A549 (cell line): ENCODE measurements at regions of chr19 and their contacts with region 1.

Region 1: DNA sequence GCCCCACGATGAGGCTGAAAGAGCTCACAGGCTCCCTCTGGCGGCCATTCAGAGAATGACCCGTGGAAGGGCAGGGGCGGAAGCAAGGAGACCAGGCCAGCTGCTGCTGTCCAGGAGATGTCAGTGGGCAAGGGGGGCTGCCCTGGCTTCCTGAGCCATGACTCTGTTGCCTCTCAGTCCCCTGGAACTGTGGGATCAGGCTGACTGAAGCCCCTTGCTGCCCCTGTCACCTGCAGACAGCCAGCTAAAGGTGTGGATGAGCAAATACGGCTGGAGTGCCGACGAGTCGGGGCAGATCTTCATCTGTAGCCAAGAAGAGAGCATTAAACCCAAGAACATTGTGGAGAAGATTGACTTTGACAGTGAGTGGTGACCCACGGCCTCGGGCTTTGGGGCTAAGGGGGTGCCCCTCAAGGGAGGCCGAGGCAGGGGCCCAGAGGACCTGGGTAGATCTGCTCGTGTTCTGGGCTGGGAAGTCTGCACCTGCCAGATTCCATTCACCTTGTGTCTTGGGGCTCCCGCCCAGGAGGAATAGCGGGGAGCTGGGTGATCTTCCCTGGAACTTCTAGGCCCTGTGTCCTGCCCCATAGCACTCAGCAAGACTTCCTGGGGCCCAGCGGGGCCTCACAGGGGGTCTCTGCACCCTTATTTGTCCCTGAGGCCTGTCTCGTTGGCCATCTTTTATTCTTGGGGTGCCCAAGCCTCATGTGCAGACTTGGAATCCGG is 12.5 kb upstream of the ACTN4 start:
- DNase-seq: peak; percentile 80 to 93
- ATAC-seq: peak; percentile 58 to 64; a peak in 5 of 6 replicates
- H3K4me3 ChIP-seq: no peak overlapping the region
- H3K27ac ChIP-seq: peak overlapping the region; percentile 9 to 77; a peak in 3 of 6 replicates
- H3K4me1 ChIP-seq: peaks cover 55% of the 10 kb centered on the region
- CTCF ChIP-seq: peak; percentile 99
- EP300 ChIP-seq: no peak
- POLR2A ChIP-seq: no peak
- RAD21 ChIP-seq: peak; percentile 82 to 88

Region 2: GRCh38 chr19:38534574-38534973 is 100.3 kb before region 1 on chr19:
- CTCF ChIA-PET with region 1: interaction called, 16 read pairs
- POLR2A ChIA-PET with region 1: no interaction called
- DNase-seq: no peak
- ATAC-seq: no peak
- H3K4me3 ChIP-seq: no peak overlapping the region
- H3K27ac ChIP-seq: no peak overlapping the region
- H3K4me1 ChIP-seq: no peaks in the 10 kb centered on the region
- CTCF ChIP-seq: no peak
- EP300 ChIP-seq: no peak
- POLR2A ChIP-seq: 0 out of 2 replicates have a peak, but pooled peaks have one; percentile 7
- RAD21 ChIP-seq: no peak

Region 3: DNA sequence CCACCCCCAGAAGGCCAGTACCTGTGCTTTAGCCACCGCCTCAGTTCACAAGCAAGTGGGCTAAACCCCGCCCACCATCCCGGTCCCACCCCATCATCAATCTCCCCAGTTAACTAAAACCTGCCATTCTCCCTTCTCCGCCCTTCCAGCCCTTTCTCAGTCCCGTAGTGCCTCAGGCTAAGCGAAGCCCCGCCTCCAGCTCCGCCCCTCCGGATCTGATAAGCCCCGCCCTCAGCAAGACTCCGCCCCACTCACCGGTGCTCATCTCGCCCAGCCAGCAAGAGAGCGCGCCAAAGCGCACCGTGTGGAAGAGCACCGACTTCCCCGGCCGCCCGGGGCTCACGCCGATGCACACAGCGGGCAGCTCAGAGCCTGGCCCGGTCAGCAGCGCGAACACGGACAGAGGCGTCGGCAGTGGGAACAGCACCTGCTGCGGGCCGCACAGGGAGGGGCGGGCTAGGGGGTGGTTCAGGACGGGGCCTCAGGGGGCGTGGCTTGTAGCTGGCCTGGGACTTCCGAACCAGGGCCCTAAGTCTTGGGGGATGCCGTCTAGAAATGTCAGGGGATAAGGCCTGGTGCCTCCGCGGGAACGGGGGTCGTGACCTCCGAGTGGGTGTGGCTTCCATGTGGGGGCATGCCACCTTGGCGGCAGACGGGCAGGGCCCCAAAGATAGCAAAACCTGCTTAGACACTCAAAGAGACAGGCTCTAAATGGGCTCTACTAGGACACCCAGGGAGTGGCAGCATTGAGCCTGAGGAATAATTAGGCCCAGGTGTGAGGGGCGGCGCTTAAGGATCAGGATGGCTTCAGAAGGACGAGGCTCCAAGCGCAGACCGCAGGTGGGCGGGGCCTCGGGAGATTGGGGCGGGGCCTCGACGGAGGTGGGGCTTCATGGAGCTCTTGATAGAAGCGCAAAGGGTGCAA is 38.6 kb before region 1 on chr19:
- CTCF ChIA-PET with region 1: interaction called, 14 read pairs
- POLR2A ChIA-PET with region 1: no interaction called
- DNase-seq: peak; percentile 84 to 90
- ATAC-seq: peak; percentile 84 to 89
- H3K4me3 ChIP-seq: peak overlapping the region; percentile 42
- H3K27ac ChIP-seq: peak overlapping the region; percentile 19 to 56; a peak in 4 of 6 replicates
- H3K4me1 ChIP-seq: 0 out of 3 replicates have a peak, but pooled peaks cover 5% of the 10 kb centered on the region
- CTCF ChIP-seq: no peak
- EP300 ChIP-seq: 0 out of 5 replicates have a peak, but pooled peaks of 1 of the 2 experiments have one; percentile 12
- POLR2A ChIP-seq: no peak
- RAD21 ChIP-seq: no peak

Region 4: DNA sequence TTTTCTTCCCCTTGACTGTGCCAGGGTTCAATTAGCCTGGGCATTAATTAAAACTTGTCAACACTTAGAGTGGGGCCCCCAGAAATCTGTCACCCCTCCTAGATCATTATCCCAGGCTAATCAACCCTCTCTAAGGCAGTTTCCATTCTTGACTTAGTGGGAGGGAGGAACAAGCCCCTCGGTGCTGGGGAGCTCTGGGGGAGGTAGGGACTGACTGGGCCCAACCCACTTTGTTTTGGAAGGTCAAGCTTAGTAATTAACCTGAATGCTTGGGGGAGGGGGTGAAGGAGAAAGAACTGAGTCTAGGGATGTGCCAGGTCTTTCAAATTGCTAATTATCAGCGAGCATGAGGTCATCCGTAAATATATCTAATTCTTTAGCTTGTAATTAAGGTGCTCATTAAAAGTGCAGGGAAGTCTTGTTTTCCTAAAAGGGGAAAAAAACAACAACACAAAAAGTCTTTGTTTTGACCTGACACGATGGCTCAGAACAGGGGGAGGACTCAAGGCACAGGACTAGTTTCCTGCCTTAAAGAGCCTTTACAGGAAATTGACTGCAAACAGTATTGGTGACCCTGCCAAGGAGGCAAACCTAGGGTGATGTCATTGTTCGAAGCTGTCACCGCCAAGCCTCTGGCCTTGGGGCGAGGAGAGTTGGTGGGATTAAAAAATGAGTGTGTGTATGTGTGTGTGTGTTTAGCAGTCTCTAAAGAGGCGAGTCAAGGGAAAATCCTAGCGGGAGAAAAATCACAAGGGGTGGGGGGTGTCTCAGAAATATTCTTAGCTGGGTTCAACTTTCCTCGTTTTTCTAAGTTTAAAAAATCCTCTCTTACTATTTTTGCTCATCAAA is 32.0 kb after region 1 on chr19:
- CTCF ChIA-PET with region 1: interaction called, 43 read pairs
- POLR2A ChIA-PET with region 1: no interaction called
- DNase-seq: peak in 1 of 2 experiments; percentile 87
- ATAC-seq: peak; percentile 19 to 30; a peak in 4 of 6 replicates
- H3K4me3 ChIP-seq: peak overlapping the region; percentile 13; the same call in 2 of the 3 replicates
- H3K27ac ChIP-seq: peak overlapping the region; percentile 75 to 91
- H3K4me1 ChIP-seq: peaks cover 100% of the 10 kb centered on the region
- CTCF ChIP-seq: no peak
- EP300 ChIP-seq: no peak
- POLR2A ChIP-seq: no peak
- RAD21 ChIP-seq: no peak

Region 5: DNA sequence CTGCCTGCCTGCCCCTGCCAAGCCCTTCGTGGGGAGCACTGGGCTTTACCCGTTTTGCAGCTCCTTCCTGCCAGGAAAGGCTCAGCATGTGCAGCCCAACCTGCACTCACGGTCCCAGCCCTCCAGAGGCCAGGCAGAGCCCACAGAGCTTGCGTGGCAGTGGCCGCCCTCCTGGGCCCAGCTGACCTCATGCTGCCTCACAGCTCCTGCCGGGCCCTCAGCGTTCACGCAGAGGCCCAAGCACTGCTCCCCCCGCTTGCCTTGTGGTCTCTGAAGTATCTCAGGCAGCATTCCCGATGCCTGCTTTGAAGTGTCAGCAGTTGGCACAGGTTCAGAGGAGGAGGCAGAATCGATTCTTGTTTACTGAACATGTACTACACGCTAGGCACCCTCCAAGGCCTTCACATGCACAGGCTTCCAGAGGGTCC is 76.8 kb after region 1 on chr19:
- CTCF ChIA-PET with region 1: interaction called, 88 read pairs
- POLR2A ChIA-PET with region 1: no interaction called
- DNase-seq: no peak
- ATAC-seq: peak; percentile 3 to 10; a peak in 3 of 6 replicates
- H3K4me3 ChIP-seq: no peak overlapping the region
- H3K27ac ChIP-seq: peak overlapping the region; percentile 1 to 50; a peak in 3 of 6 replicates
- H3K4me1 ChIP-seq: peaks cover 46% of the 10 kb centered on the region
- CTCF ChIP-seq: no peak
- EP300 ChIP-seq: no peak
- POLR2A ChIP-seq: no peak
- RAD21 ChIP-seq: no peak

Region 6: DNA sequence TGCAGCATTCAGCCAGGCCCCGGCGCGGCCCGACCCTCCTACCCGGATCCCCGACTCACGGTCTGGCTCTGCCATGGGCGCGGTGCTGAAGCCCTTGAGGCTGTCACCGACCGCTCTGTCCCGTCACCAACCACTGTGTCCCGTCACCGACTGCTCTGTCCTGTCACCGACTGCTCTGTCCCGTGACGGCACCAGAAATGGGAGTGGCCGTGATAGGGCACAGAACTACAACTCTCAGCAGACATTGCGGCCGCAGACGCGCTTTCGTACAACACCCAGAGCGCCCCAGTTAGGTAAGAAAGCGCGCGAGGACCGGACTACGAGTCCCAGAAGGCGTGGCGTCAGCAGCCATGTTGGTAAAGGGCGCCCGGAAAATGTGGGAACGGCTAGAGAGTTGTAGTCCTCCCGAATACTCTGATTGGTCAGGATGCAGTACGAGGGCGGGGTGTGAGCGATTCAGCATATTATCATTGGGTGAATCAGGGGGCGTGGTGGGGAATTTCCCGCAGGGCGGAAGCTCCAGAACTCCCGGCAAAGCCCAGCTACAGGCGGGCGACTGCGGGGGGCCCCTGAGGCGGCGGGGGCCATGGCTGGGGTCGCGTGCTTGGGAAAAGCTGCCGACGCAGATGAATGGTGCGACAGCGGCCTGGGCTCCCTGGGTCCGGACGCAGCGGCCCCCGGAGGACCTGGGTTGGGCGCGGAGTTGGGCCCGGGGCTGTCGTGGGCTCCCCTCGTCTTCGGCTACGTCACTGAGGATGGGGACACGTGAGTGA is 264.7 kb after region 1 on chr19 and contains the starts of genes NFKBIB and SIRT2:
- CTCF ChIA-PET with region 1: interaction called, 10 read pairs
- POLR2A ChIA-PET with region 1: no interaction called
- DNase-seq: peak; percentile 100
- ATAC-seq: peak; percentile 92 to 97
- H3K4me3 ChIP-seq: peak within 1 kb of the TSS; percentile 56
- H3K27ac ChIP-seq: peak within 1 kb of the TSS; percentile 76 to 85
- H3K4me1 ChIP-seq: peaks cover 17% of the 10 kb centered on the region
- CTCF ChIP-seq: no peak
- EP300 ChIP-seq: no peak
- POLR2A ChIP-seq: peak; percentile 63
- RAD21 ChIP-seq: no peak
- polyA plus RNA-seq, gene NFKBIB: 25.6 and 35.0 TPM in 2 replicates
- polyA plus RNA-seq, gene SIRT2: 28.6 and 31.5 TPM in 2 replicates